Psoas muscle (tissue), 8 donors: ENCODE measurements at regions of chr6 and their contacts with region 1.

Region 1: GRCh38 chr6:24205020-24205492 is 79.0 kb downstream of the NRSN1 start:
- DNase-seq: no peak
- ATAC-seq: peak in 1 of 4 donors; percentile 40
- H3K4me3 ChIP-seq: no peak overlapping the region
- H3K27ac ChIP-seq: no peak overlapping the region
- H3K4me1 ChIP-seq: no peaks in the 10 kb centered on the region
- H3K27me3 ChIP-seq: no peaks in the 10 kb centered on the region
- CTCF ChIP-seq: peak; percentile 62

Region 2: GRCh38 chr6:24064082-24064481 is 141.0 kb before region 1 on chr6:
- intact Hi-C with region 1: loop called in 1 of 2 experiments (anchors 10 kb)
- DNase-seq: no peak
- ATAC-seq: no peak
- H3K4me3 ChIP-seq: no peak overlapping the region
- H3K27ac ChIP-seq: no peak overlapping the region
- H3K4me1 ChIP-seq: no peaks in the 10 kb centered on the region
- H3K27me3 ChIP-seq: no peaks in the 10 kb centered on the region
- CTCF ChIP-seq: peak; percentile 10

Region 3: DNA sequence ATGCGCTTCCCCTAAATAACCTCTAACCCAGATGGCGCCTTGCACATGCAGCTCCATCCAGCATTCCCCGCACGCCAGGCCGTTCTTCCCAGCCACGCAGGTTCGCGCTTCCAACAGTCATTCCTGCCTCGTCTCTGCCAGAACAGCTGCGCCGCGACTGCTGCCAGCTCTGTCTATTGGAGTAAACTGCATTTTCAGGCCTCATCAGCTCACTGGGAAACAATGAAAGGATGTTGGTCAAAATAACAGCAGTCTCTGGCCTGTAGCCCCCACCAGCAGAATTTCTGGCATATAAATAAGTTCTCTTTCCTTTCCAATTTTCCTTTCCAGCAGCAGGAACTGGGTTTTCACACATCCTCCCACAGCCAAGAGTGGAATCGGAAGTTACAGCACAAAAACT is 64.5 kb before region 1 on chr6:
- intact Hi-C with region 1: no loop called
- DNase-seq: peak; percentile 58 to 83
- ATAC-seq: peak; percentile 31 to 66 (median 43)
- H3K4me3 ChIP-seq: no peak overlapping the region
- H3K27ac ChIP-seq: no peak overlapping the region
- H3K4me1 ChIP-seq: no peaks in the 10 kb centered on the region
- H3K27me3 ChIP-seq: no peaks in the 10 kb centered on the region
- CTCF ChIP-seq: no peak